Adrenal gland (tissue), 19 donors: ENCODE measurements at regions of chr6 and their contacts with region 1.

Region 1: GRCh38 chr6:168132531-168133167 is 53.6 kb upstream of the FRMD1 start:
- DNase-seq: peak in 6 of 7 donors; percentile 28 to 63 (median 44)
- H3K4me3 ChIP-seq: no peak overlapping the region
- H3K27ac ChIP-seq: no peak overlapping the region
- H3K4me1 ChIP-seq: no peaks in the 10 kb centered on the region
- H3K27me3 ChIP-seq: no peaks in the 10 kb centered on the region
- CTCF ChIP-seq: peak in 5 of 6 experiments; percentile 22 to 48 (median 33)
- POLR2A ChIP-seq: no peak

Region 2: GRCh38 chr6:167907837-167908681 is 224.6 kb before region 1 on chr6:
- intact Hi-C with region 1: loop called in 1 of 2 experiments (anchors 10 kb)
- DNase-seq: peak in 2 of 7 donors; percentile 10 to 27
- H3K4me3 ChIP-seq: no peak overlapping the region
- H3K27ac ChIP-seq: no peak overlapping the region
- H3K4me1 ChIP-seq: no peaks in the 10 kb centered on the region
- H3K27me3 ChIP-seq: no peaks in the 10 kb centered on the region
- CTCF ChIP-seq: peak in 5 of 6 experiments; percentile 4 to 53 (median 32)
- POLR2A ChIP-seq: no peak